MCF 10A (cell line): ENCODE measurements at regions of chrX and their contacts with region 1.

Region 1: DNA sequence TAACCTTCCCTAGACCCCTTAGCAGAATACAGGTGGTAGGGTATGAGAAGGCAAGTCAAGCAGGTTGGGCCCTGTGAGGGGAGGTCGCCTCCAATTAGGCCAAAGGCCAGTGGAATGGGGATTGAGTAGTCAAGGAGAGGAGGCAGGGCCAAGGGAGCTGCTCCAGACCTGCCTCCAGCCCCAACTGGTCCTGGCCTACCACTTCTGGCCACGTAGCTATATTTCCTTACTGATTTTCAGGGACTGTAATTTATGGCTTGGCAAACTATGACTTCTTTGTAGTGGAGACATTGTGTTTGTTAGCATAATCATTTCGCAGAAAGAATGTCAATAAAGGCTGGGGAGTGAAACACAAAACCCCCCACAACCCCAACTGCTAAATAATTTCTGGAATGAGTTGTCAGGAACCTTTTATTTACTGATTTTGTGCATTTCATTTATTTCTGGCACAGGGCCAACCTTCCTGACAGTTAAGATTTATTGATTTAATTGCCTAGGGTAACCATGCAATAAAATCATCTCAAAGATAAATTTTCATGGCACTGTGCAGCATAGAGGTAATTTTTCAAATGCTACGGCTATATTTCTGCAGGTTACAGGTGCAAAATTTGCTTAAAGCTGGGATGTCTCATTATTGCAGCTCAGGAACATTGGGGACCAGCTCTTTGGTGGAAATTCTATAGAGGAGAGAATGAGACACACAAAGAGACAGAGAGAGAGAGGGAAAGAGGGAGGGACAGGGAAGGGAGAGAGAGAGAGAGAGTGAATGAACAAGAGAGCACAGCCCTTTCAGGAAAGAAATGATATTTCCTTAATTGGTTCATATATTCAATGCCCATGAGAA is 494.9 kb downstream of the IDS start:
- DNase-seq: no peak
- H3K4me3 Mint-ChIP-seq: no peak overlapping the region
- H3K27ac Mint-ChIP-seq: no peak overlapping the region
- H3K4me1 Mint-ChIP-seq: no peaks in the 10 kb centered on the region
- H3K27me3 Mint-ChIP-seq: no peaks in the 10 kb centered on the region
- CTCF ChIP-seq: no peak

Region 2: GRCh38 chrX:148609515-148610327 is 400.5 kb before region 1 on chrX:
- CTCF ChIA-PET with region 1: no interaction called
- POLR2A ChIA-PET with region 1: no interaction called
- intact Hi-C with region 1: loop called (anchors 10 kb)
- DNase-seq: peak; percentile 56
- H3K4me3 Mint-ChIP-seq: no peak overlapping the region
- H3K27ac Mint-ChIP-seq: no peak overlapping the region
- H3K4me1 Mint-ChIP-seq: no peaks in the 10 kb centered on the region
- H3K27me3 Mint-ChIP-seq: no peaks in the 10 kb centered on the region
- CTCF ChIP-seq: no peak

Region 3: GRCh38 chrX:148811236-148811635 is 199.0 kb before region 1 on chrX:
- CTCF ChIA-PET with region 1: no interaction called
- POLR2A ChIA-PET with region 1: no interaction called
- intact Hi-C with region 1: no loop called
- DNase-seq: peak; percentile 8
- H3K4me3 Mint-ChIP-seq: no peak overlapping the region
- H3K27ac Mint-ChIP-seq: no peak overlapping the region
- H3K4me1 Mint-ChIP-seq: no peaks in the 10 kb centered on the region
- H3K27me3 Mint-ChIP-seq: no peaks in the 10 kb centered on the region
- CTCF ChIP-seq: no peak